Calu3 (cell line): ENCODE measurements at regions of chr2 and their contacts with region 1.

Region 1: GRCh38 chr2:73290049-73290839 is 3.1 kb downstream of the EGR4 start:
- DNase-seq: peak; percentile 65
- H3K4me3 Mint-ChIP-seq: no peak overlapping the region
- H3K27ac Mint-ChIP-seq: no peak overlapping the region
- H3K4me1 Mint-ChIP-seq: peaks cover 8% of the 10 kb centered on the region
- H3K27me3 Mint-ChIP-seq: peaks cover 86% of the 10 kb centered on the region
- CTCF ChIP-seq: no peak

Region 2: DNA sequence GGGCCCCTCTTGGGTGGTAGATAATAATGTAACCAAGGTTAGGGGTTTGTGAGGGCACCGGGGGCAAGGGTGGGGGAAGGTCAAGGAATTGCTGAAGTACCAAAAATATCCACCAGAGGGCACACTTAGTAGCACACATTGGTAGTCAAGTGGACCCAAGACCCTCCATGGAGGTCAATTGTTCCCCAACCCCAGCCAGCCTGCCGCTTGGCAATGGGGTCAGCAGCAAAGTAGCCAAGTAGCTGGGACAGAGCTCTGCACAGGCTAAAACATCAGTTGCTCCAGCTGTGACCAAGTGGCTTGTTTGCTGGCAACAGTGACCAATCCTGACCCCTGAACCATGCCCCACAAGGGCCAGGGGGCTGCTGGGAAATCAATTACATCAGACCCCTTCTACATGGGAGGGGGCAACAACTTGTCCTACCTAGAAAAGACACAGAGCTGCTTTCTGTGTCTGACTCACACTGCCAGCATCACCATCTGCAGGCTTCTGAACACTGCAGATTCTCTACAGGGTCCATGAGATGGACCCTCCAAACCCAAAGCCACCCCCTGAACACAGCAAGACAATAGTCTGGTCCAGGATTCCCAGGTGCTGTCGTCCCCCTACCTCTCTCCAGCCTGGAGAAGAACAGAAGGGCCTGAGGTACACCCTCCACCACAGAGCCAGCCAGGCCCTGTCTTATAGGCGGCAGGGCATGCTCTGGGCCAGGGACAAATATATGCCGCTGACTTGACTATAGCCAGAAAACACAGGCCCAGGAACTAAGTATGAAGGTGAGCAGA is 296.9 kb before region 1 on chr2:
- CTCF ChIA-PET with region 1: no interaction called
- intact Hi-C with region 1: no loop called
- DNase-seq: peak; percentile 55
- H3K4me3 Mint-ChIP-seq: no peak overlapping the region
- H3K27ac Mint-ChIP-seq: no peak overlapping the region
- H3K4me1 Mint-ChIP-seq: no peaks in the 10 kb centered on the region
- H3K27me3 Mint-ChIP-seq: no peaks in the 10 kb centered on the region
- CTCF ChIP-seq: peak; percentile 90

Region 3: GRCh38 chr2:73239776-73240175 is 50.5 kb before region 1 on chr2:
- CTCF ChIA-PET with region 1: no interaction called
- intact Hi-C with region 1: loop called (anchors 2 kb)
- DNase-seq: no peak
- H3K4me3 Mint-ChIP-seq: no peak overlapping the region
- H3K27ac Mint-ChIP-seq: no peak overlapping the region
- H3K4me1 Mint-ChIP-seq: peaks cover 26% of the 10 kb centered on the region
- H3K27me3 Mint-ChIP-seq: no peaks in the 10 kb centered on the region
- CTCF ChIP-seq: no peak

Region 4: GRCh38 chr2:73301636-73302035 is 11.4 kb after region 1 on chr2:
- CTCF ChIA-PET with region 1: no interaction called
- intact Hi-C with region 1: no loop called
- DNase-seq: no peak
- H3K4me3 Mint-ChIP-seq: no peak overlapping the region
- H3K27ac Mint-ChIP-seq: no peak overlapping the region
- H3K4me1 Mint-ChIP-seq: no peaks in the 10 kb centered on the region
- H3K27me3 Mint-ChIP-seq: peaks cover 73% of the 10 kb centered on the region
- CTCF ChIP-seq: no peak